ENCODE measurements at regions of chr13 and their contacts with region 1.

Region 1: DNA sequence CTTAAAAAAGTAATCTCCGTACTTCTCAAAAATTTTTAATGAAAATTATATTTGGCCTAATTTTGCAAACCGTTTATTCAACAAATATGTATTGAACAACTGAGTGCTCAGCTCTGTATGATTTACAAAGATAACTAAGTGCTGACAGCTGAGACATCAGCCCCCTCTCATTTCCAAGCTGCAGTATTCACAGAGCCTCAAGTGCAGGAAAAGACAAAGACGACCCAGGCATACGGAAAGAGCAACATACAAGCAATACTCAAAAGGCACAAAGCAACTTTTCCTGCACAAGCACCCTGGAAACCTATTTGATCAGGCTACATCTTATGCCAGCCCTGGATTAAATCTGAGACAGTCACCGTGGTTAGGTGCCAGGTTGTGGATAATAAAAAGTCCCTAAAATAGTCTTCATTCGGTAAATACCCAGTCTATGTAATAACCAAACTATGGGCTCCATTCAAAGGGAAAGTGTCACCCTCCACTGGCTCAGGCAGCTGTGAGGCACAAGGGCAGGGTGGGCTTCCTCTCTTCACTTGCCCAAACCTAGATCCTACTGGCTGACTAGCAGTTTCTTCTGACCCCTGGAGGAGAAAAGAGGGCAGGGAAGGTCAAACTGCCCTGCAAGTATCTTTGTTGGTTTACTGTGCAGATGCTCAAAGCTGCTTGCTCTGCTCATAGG is 65.5 kb downstream of the TBC1D4 start:
- DNase-seq: no peak
- ATAC-seq: peak; percentile 18; the same call in 1 of the 2 replicates
- H3K4me3 ChIP-seq: no peak overlapping the region
- H3K27ac ChIP-seq: no peak overlapping the region
- H3K4me1 ChIP-seq: peaks cover 11% of the 10 kb centered on the region
- H3K27me3 ChIP-seq: no peaks in the 10 kb centered on the region
- CTCF ChIP-seq: no peak
- POLR2A ChIP-seq: no peak
- RAD21 ChIP-seq: no peak

Region 2: DNA sequence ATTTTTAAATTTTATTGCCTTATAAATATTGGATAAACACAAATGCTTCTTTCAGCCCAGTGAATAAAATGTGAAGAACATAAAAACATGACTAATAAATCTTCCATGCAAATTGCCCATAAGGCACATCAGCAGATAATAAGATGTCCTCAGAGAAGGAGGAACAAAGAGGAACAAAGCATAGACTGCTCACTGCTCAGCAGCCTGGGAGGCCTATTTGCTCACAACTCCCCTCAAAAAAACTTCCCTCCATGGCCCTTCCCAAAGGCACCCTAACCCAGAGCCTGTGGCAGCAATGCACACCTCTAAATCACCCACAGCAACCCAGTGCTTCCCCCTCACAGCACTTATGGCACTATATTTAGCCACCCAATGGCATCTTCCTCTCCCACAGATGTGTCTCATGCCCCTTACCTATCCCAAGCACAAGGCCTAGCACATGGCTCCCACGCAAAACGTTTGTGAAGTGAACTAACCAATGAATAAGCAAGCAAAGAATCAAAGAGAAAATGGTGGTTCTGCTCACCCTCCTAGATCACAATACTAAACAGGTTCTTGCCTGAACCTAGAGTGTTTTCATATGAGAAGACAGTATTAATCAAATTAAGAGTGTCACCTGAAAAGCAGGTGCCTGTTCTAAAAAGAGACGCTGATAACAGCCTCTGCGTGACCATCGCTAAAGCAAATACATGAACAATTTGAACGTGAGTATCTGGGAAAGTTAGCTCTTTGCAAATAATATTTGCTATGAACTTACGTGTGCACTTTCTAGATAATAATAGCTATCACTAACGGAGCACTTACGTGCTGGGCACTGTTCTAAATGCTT is 31.4 kb before region 1 on chr13:
- CTCF ChIA-PET with region 1: no interaction called
- POLR2A ChIA-PET with region 1: no interaction called
- dilution Hi-C with region 1: no loop called
- in situ Hi-C with region 1: no loop called
- intact Hi-C with region 1: loop called (anchors 5 kb)
- DNase-seq: no peak
- ATAC-seq: no peak
- H3K4me3 ChIP-seq: no peak overlapping the region
- H3K27ac ChIP-seq: no peak overlapping the region
- H3K4me1 ChIP-seq: no peaks in the 10 kb centered on the region
- H3K27me3 ChIP-seq: no peaks in the 10 kb centered on the region
- CTCF ChIP-seq: no peak
- POLR2A ChIP-seq: no peak
- RAD21 ChIP-seq: no peak

Measured in IMR-90 (cell line).